A673 (cell line): ENCODE measurements at regions of chr2 and their contacts with region 1.

Region 1: DNA sequence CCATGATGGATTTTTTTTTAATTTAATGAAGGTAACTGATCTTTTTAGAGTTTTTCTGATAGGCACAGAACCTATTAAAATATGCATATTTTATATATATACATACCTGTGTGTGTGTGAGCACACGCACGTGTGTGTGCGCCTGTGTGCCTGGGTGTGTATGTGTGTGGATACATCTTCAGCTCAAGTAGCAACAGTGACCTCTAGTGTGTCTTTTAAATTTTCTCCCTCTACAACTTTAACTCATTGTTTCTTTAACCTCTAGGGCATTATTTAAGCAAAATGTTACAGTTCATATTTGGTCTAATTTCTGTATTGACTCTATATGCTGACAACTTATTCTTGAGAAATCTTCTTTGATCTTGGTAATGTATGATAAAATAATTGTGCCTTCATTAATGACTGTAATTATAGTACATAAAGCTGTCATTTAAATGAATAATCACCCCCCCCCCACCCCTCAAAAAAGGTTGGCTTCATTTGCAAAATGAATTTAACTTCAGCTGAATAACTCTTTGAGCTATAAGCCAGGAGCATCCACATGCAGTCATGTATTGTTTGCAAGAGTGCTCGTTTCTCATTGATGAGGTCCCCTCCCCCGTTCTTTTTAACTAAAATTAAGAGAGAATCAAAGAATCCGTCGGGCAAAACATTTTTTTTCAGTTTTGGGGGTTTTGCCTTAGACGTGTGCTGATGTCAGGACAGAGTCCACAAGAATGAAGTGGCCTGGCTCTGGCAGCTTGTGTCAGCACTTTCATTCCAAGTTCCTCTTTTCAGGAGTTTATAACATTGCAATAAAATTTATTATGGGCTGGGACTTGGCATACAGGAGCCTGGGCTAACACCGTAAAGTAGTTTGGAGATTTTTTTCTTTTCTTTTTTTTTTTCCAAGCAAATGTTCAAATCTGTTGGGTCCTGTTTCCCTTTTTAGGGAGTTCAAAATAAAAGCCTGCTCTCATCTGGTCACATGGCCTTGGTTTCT is 80.0 kb downstream of the ETAA1 start:
- DNase-seq: peak; percentile 66
- H3K4me3 ChIP-seq: no peak overlapping the region
- H3K27ac ChIP-seq: no peak overlapping the region
- H3K4me1 ChIP-seq: peaks cover 8% of the 10 kb centered on the region
- H3K27me3 ChIP-seq: no peaks in the 10 kb centered on the region
- CTCF ChIP-seq: peak; percentile 67

Region 2: GRCh38 chr2:66569321-66569851 is 907.7 kb before region 1 on chr2:
- CTCF ChIA-PET with region 1: no interaction called
- POLR2A ChIA-PET with region 1: no interaction called
- intact Hi-C with region 1: no loop called
- DNase-seq: peak; percentile 96
- H3K4me3 ChIP-seq: no peak overlapping the region
- H3K27ac ChIP-seq: peak overlapping the region; percentile 55
- H3K4me1 ChIP-seq: peaks cover 84% of the 10 kb centered on the region
- H3K27me3 ChIP-seq: no peaks in the 10 kb centered on the region
- CTCF ChIP-seq: no peak

Region 3: DNA sequence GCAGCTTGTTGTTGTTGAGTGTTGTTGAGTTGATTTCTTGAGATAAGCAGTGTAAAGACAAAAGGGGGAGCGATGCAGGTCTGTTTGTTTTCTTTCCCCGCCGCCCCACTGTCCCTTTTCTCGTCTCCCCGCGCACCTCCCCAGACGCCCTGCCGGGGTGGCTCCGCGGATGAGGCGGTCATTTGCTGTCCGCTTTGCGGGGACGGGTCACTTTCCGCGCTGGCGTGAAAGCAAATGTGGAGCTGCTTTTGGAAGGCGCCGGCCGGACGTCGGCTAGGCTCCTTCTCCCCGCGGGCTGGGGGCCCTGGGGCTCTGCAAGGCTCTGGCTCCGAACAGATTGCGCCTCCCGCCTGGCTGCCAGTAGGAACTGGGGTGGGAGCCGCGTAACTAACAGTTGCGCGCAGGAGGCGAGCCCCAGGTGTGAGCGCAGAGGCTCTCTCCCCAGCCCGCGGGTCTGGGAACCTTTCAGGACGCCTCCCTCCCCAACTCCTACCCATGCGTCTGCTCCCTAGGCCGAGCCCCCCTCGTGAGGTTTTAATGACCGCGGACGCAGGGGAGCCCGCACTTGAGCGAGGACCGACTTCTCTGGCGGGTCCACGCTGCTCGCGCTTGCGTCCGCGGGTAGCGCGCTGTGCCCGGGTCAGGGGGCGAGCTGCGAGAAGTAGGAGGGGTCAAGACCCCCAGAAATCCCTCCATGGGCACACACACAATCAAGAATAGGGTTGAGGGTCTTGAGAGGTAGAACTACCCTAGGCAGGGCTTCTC is 895.6 kb before region 1 on chr2:
- CTCF ChIA-PET with region 1: no interaction called
- POLR2A ChIA-PET with region 1: no interaction called
- intact Hi-C with region 1: loop called (anchors 5 kb)
- DNase-seq: peak; percentile 70
- H3K4me3 ChIP-seq: peak overlapping the region; percentile 65
- H3K27ac ChIP-seq: peak overlapping the region; percentile 92
- H3K4me1 ChIP-seq: peaks cover 62% of the 10 kb centered on the region
- H3K27me3 ChIP-seq: no peaks in the 10 kb centered on the region
- CTCF ChIP-seq: no peak

Region 4: GRCh38 chr2:67234439-67234838 is 242.7 kb before region 1 on chr2:
- CTCF ChIA-PET with region 1: no interaction called
- POLR2A ChIA-PET with region 1: no interaction called
- intact Hi-C with region 1: loop called (anchors 5 kb)
- DNase-seq: peak; percentile 88
- H3K4me3 ChIP-seq: no peak overlapping the region
- H3K27ac ChIP-seq: no peak overlapping the region
- H3K4me1 ChIP-seq: peaks cover 25% of the 10 kb centered on the region
- H3K27me3 ChIP-seq: no peaks in the 10 kb centered on the region
- CTCF ChIP-seq: peak; percentile 84

Region 5: DNA sequence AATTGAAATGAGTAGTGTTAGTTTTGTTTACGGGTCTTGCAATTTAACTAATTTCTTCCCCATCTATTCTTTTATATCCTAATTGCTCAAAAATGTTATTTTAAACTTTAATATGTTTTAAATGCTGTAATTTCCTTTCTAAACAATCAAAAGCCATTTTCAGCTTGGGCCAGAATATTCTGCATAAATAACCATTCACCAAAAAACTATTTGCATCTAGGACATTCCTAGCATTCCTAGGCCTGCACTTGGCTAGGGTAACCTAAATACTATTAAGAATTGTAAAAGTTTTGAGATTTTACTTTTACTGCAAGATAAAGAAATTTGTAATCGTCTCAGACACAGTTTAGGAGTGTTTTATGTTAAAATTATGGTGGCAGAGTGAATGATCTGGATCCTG is 87.8 kb before region 1 on chr2:
- CTCF ChIA-PET with region 1: interaction called, 11 read pairs
- POLR2A ChIA-PET with region 1: interaction called, 3 read pairs
- intact Hi-C with region 1: no loop called
- DNase-seq: peak; percentile 48
- H3K4me3 ChIP-seq: no peak overlapping the region
- H3K27ac ChIP-seq: peak overlapping the region; percentile 72
- H3K4me1 ChIP-seq: peaks cover 17% of the 10 kb centered on the region
- H3K27me3 ChIP-seq: no peaks in the 10 kb centered on the region
- CTCF ChIP-seq: no peak

Region 6: GRCh38 chr2:67840460-67841068 is 363.5 kb after region 1 on chr2:
- CTCF ChIA-PET with region 1: interaction called, 3 read pairs
- POLR2A ChIA-PET with region 1: no interaction called
- intact Hi-C with region 1: loop called (anchors 10 kb)
- DNase-seq: peak; percentile 88
- H3K4me3 ChIP-seq: no peak overlapping the region
- H3K27ac ChIP-seq: no peak overlapping the region
- H3K4me1 ChIP-seq: peaks cover 16% of the 10 kb centered on the region
- H3K27me3 ChIP-seq: no peaks in the 10 kb centered on the region
- CTCF ChIP-seq: peak; percentile 96

Region 7: GRCh38 chr2:68689553-68690537 is 1212.7 kb after region 1 on chr2:
- CTCF ChIA-PET with region 1: no interaction called
- POLR2A ChIA-PET with region 1: no interaction called
- intact Hi-C with region 1: no loop called
- DNase-seq: peak; percentile 90
- H3K4me3 ChIP-seq: no peak overlapping the region
- H3K27ac ChIP-seq: peak overlapping the region; percentile 54
- H3K4me1 ChIP-seq: peaks cover 47% of the 10 kb centered on the region
- H3K27me3 ChIP-seq: no peaks in the 10 kb centered on the region
- CTCF ChIP-seq: no peak